Posterior cingulate gyrus (tissue), 11 donors: ENCODE measurements at regions of chr2 and their contacts with region 1.

Region 1: GRCh38 chr2:72887754-72888437 is 688 bp downstream of the SPR start:
- DNase-seq: peak; percentile 73 to 98 (median 88)

Region 2: DNA sequence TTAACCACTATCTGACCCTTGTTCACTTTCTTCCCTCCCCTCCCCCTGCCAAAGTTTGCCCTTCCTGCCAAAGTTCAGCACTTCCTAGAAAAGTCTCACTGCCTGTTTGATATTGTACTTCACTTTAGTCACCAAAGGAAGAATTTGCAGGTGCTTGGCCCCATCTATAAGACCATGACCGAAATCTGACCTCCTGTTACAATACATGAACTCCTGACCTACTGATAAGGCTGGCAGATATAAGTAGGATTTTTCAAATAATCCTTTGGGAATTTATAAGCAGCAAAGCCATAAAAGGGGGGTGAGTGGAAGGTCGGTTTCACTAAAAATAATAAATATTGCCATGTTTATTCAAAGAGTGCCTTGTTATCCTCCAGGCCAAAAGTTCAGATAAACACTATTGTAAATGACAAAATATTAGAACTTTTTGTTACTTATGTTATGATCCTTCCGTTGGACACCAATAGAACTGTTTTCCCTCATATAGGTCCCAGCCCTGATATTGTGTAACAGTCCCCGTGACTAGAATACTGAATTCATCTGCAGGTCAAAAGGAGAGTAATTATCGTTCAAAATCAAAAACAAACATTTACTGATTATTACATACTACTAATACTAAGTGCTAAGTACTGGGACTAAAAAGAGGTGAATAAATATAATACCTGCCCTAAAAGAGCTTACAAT is 339.7 kb before region 1 on chr2:
- intact Hi-C with region 1: no loop called
- DNase-seq: no peak

Region 3: GRCh38 chr2:72973566-72974435 is 85.9 kb after region 1 on chr2:
- intact Hi-C with region 1: loop called (anchors 2 kb)
- DNase-seq: peak in 5 of 10 donors; percentile 29 to 88 (median 44)

Region 4: GRCh38 chr2:73013936-73014335 is 126.0 kb after region 1 on chr2:
- intact Hi-C with region 1: no loop called
- DNase-seq: no peak

Region 5: GRCh38 chr2:73163483-73164367 is 275.8 kb after region 1 on chr2:
- intact Hi-C with region 1: loop called (anchors 5 kb)
- DNase-seq: peak; percentile 52 to 96 (median 74)

Region 6: DNA sequence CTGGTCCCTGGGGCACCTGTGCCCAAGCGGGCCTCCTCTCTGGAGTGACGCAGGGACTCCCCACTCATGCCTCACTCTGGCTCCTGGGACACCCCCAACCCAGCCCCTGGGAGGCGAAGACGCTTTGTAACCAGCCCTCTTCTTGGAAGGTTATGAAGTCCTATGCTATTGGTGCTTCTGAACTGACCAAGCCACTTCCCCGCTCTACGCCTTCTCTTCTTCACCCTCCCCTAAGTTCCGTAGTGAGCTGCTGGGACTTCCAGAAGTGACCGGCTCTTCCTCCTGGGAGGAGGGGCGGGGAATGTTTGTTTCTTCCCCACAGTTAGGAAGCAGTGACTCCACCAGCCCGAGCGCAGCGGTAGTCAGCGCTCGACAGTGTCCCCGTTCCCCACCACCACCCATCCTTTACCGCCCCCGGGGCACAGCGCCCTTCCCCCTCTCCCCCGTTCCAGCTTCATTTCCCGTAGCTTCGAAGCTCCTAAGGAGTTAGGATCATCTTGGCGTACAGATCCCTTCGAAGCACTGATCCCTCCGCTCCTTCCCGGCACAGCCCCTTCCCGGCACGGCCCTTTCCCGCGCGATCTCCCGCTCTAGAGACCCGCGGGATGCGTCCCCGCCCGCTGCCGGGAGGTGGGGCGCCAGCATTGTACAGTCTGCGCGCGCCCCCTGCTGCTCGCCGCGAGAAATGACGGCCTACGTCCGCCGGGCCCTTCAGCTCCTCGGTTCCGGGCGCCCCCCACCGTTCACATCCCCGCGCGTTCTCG is 289.2 kb after region 1 on chr2:
- intact Hi-C with region 1: loop called (anchors 5 kb)
- DNase-seq: peak; percentile 80 to 98 (median 91)